ENCODE measurements at regions of chr22 and their contacts with region 1.

Region 1: GRCh38 chr22:41015003-41015402 is 63.8 kb downstream of the RBX1 start:
- DNase-seq: no peak
- H3K4me3 Mint-ChIP-seq: no peak overlapping the region
- H3K27ac Mint-ChIP-seq: no peak overlapping the region
- H3K4me1 Mint-ChIP-seq: no peaks in the 10 kb centered on the region
- H3K27me3 Mint-ChIP-seq: no peaks in the 10 kb centered on the region

Region 2: GRCh38 chr22:40960145-40960544 is 54.9 kb before region 1 on chr22:
- intact Hi-C with region 1: loop called (anchors 5 kb)
- DNase-seq: no peak
- H3K4me3 Mint-ChIP-seq: no peak overlapping the region
- H3K27ac Mint-ChIP-seq: no peak overlapping the region
- H3K4me1 Mint-ChIP-seq: peaks cover 7% of the 10 kb centered on the region
- H3K27me3 Mint-ChIP-seq: no peaks in the 10 kb centered on the region

Region 3: DNA sequence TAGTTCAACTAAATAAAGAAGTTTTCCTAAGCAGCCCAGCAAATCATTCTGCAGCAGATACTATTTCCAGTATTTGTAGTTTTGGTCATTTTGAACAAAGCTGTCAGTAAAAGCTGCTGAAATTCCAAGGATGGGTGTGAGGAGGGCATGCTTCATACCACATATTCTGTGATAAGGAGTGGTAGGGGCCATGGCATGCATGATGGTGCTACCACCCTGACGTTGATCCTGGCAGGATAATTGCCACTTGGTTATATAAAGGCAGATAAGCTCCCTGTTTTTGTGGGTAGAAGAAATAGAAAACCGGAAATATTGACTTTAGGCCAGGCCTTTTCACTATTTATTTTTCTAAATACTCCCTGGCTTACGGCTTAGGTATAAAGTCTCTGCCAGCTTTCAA is 157.0 kb after region 1 on chr22:
- intact Hi-C with region 1: no loop called
- DNase-seq: no peak
- H3K4me3 Mint-ChIP-seq: no peak overlapping the region
- H3K27ac Mint-ChIP-seq: no peak overlapping the region
- H3K4me1 Mint-ChIP-seq: no peaks in the 10 kb centered on the region
- H3K27me3 Mint-ChIP-seq: no peaks in the 10 kb centered on the region

Measured in activated T-helper 2 cell treated with anti-CD3 and anti-CD28 coated beads, Interferon-gamma antibody, Interleukin-2, Interleukin-4, amounts not matched to agents 10 μg/mL and 5 μg/mL and 100 μg/mL, durations not matched to agents 14 hours and 24 hours and 36 hours (primary cell).